ENCODE measurements at regions of chr2 and their contacts with region 1.

Region 1: GRCh38 chr2:84905181-84906107 is at the start of gene TMSB10:
- DNase-seq: peak; percentile 93
- H3K4me3 Mint-ChIP-seq: peak within 1 kb of the TSS; percentile 94
- H3K27ac Mint-ChIP-seq: peak within 1 kb of the TSS; percentile 97
- H3K4me1 Mint-ChIP-seq: peaks cover 67% of the 10 kb centered on the region
- H3K27me3 Mint-ChIP-seq: peaks cover 5% of the 10 kb centered on the region

Region 2: GRCh38 chr2:84881581-84882414 is 23.6 kb before region 1 on chr2:
- CTCF ChIA-PET with region 1: interaction called, 19 read pairs
- DNase-seq: peak; percentile 93
- H3K4me3 Mint-ChIP-seq: peak overlapping the region; percentile 89
- H3K27ac Mint-ChIP-seq: peak overlapping the region; percentile 96
- H3K4me1 Mint-ChIP-seq: peaks cover 58% of the 10 kb centered on the region
- H3K27me3 Mint-ChIP-seq: no peaks in the 10 kb centered on the region

Region 3: GRCh38 chr2:84919885-84920580 is 14.6 kb after region 1 on chr2:
- CTCF ChIA-PET with region 1: interaction called, 60 read pairs
- DNase-seq: peak; percentile 53
- H3K4me3 Mint-ChIP-seq: peak overlapping the region; percentile 10
- H3K27ac Mint-ChIP-seq: peak overlapping the region; percentile 84
- H3K4me1 Mint-ChIP-seq: peaks cover 61% of the 10 kb centered on the region
- H3K27me3 Mint-ChIP-seq: no peaks in the 10 kb centered on the region

Region 4: GRCh38 chr2:84954329-84954728 is 48.9 kb after region 1 on chr2:
- CTCF ChIA-PET with region 1: no interaction called
- DNase-seq: no peak
- H3K4me3 Mint-ChIP-seq: no peak overlapping the region
- H3K27ac Mint-ChIP-seq: no peak overlapping the region
- H3K4me1 Mint-ChIP-seq: peaks cover 5% of the 10 kb centered on the region
- H3K27me3 Mint-ChIP-seq: no peaks in the 10 kb centered on the region

Measured in activated naive CD4-positive, alpha-beta T cell treated with anti-CD3 and anti-CD28 coated beads, Interleukin-2, amount 10 ng/mL, durations not matched to agents 7 days and 5 days (primary cell).